ENCODE measurements at regions of chr11 and their contacts with region 1.

Region 1: DNA sequence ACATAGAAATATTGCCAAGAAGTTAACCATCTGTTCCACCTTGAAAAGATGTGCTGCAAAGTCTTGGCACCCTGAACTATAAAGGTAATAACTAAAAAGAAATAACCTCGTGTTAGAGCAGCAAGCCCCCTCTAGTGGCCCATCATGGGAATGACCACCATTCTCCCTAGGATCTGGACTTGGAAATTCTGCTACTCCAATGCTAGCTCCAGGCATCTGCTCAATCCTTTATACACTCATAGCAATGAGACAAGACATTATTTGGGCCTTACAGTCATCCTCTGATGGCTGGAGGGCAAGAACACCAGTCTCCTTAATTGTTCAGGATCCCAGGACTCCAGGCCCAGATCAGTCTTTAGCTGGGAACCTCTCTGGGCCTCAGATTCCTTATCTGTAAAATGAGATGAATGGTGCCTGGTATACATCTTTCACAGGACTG is 76.0 kb downstream of the CWC15 start:
- H3K4me3 Mint-ChIP-seq: no peak overlapping the region
- H3K27ac Mint-ChIP-seq: no peak overlapping the region
- H3K4me1 Mint-ChIP-seq: peaks cover 6% of the 10 kb centered on the region
- H3K27me3 Mint-ChIP-seq: no peaks in the 10 kb centered on the region

Region 2: GRCh38 chr11:94315664-94316063 is 581.7 kb before region 1 on chr11:
- intact Hi-C with region 1: no loop called
- H3K4me3 Mint-ChIP-seq: no peak overlapping the region
- H3K27ac Mint-ChIP-seq: no peak overlapping the region
- H3K4me1 Mint-ChIP-seq: no peaks in the 10 kb centered on the region
- H3K27me3 Mint-ChIP-seq: peaks cover 6% of the 10 kb centered on the region

Region 3: DNA sequence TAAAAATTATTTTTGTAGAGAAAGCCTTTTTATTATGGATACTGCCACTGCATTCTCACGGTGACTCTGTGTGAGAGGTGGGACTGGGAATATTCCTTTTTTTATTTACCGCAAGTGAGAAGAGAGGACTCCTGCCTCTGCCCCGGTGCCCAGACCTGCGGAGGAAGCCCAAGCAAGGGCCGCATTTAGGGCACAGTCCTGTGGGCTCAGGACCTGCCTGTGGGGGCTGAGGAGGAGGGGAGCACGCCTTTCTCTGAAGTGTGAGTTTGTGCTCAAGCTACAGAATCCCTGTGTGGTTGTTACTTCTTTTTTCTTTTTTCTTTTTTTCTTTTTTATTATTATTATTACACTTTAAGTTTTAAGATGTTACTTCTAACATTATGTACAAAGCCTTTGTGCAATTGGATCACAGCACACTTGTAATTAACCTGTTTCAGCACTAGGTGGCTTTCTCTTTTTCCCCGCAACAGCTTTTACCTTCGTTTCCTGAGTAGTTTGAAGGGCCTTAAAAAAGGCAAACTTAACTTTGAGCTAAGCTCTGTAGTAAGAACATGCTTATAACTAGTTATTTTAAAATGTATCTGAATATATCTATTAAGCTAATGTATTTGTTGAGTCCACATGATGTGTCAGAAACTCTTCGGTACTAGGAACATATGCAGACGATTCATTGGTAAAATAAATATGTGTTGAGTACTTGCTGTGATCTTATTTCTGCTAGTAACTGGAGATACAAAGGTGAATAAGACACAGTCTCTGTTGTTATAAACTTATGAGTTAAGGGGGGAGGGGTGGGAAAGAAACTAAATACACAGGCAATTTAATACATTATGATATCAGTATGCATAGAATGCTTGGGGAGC is 110.9 kb before region 1 on chr11:
- intact Hi-C with region 1: loop called (anchors 2 kb)
- H3K4me3 Mint-ChIP-seq: no peak overlapping the region
- H3K27ac Mint-ChIP-seq: no peak overlapping the region
- H3K4me1 Mint-ChIP-seq: no peaks in the 10 kb centered on the region
- H3K27me3 Mint-ChIP-seq: no peaks in the 10 kb centered on the region

Measured in dendritic cell treated with granulocyte-macrophage colony-stimulating factor and Interleukin-4, amounts not matched to agents 40 ng/mL and 50 ng/mL, for 4 days (primary cell).